Calu3 (cell line): ENCODE measurements at regions of chr7 and their contacts with region 1.

Region 1: DNA sequence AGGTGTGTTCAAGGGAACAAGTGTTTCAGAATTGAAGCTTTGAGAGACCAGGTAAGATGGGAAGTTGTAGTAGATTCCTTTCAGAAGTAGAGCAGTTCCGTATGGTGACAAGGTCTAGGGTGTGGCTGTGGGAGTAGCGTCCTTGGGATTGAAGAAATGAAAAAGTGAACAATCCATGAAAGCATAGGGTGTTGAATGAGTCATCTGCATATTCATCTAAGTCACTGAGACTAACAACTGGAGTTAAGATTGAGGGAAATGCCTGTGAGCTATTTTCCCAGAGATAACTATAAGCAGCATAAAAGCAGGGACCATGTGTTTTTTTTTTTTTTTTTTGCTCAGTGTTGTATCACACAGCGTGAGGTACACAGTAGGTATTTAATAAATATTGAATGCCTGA is 134.8 kb downstream of the PHTF2 start:
- DNase-seq: no peak
- H3K4me3 Mint-ChIP-seq: no peak overlapping the region
- H3K27ac Mint-ChIP-seq: peak overlapping the region; percentile 4
- H3K4me1 Mint-ChIP-seq: peaks cover 19% of the 10 kb centered on the region
- H3K27me3 Mint-ChIP-seq: no peaks in the 10 kb centered on the region
- CTCF ChIP-seq: no peak

Region 2: DNA sequence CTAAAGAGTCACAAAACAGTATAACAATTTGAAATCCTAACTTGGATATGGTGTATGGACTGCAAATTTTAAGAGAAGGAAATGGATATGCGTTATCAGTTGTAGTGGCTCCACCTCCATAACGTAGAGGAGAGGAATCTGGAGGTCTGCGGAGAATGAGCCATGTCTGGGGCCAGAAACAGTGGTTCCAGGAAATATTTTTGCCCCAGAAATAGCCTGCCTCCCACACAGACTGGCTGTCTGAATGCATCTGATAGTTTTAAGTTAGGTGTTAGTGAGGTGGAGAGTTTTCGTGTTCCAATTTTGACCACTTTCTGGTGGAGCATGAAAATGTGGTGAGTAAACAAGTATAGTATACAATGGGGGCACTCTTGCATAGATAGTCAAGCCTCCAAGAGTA is 133.2 kb before region 1 on chr7:
- CTCF ChIA-PET with region 1: no interaction called
- intact Hi-C with region 1: loop called (anchors 5 kb)
- DNase-seq: no peak
- H3K4me3 Mint-ChIP-seq: peak overlapping the region; percentile 88
- H3K27ac Mint-ChIP-seq: peak overlapping the region; percentile 56
- H3K4me1 Mint-ChIP-seq: peaks cover 30% of the 10 kb centered on the region
- H3K27me3 Mint-ChIP-seq: no peaks in the 10 kb centered on the region
- CTCF ChIP-seq: no peak

Region 3: GRCh38 chr7:78326876-78327275 is 393.5 kb after region 1 on chr7:
- CTCF ChIA-PET with region 1: no interaction called
- intact Hi-C with region 1: no loop called
- DNase-seq: no peak
- H3K4me3 Mint-ChIP-seq: no peak overlapping the region
- H3K27ac Mint-ChIP-seq: no peak overlapping the region
- H3K4me1 Mint-ChIP-seq: no peaks in the 10 kb centered on the region
- H3K27me3 Mint-ChIP-seq: no peaks in the 10 kb centered on the region
- CTCF ChIP-seq: no peak